Transverse colon (tissue), 4 donors: ENCODE measurements at regions of chr3 and their contacts with region 1.

Region 1: GRCh38 chr3:150546226-150547044 is at the starts of genes EIF2A and SERP1:
- DNase-seq: peak; percentile 99
- H3K4me3 ChIP-seq: peak within 1 kb of the TSS; percentile 67 to 94 (median 82)
- H3K27ac ChIP-seq: peak within 1 kb of the TSS; percentile 96 to 100 (median 98)
- H3K4me1 ChIP-seq: peaks cover 20 to 38% (median 27%) of the 10 kb centered on the region in 4 donors
- H3K27me3 ChIP-seq: no peaks in the 10 kb centered on the region
- CTCF ChIP-seq: no peak
- EP300 ChIP-seq: no peak
- POLR2A ChIP-seq: peak; percentile 99
- total RNA-seq, gene EIF2A: 20.9 to 132 (median 72.2) TPM
- total RNA-seq, gene SERP1: 96.9 to 341 (median 275) TPM

Region 2: DNA sequence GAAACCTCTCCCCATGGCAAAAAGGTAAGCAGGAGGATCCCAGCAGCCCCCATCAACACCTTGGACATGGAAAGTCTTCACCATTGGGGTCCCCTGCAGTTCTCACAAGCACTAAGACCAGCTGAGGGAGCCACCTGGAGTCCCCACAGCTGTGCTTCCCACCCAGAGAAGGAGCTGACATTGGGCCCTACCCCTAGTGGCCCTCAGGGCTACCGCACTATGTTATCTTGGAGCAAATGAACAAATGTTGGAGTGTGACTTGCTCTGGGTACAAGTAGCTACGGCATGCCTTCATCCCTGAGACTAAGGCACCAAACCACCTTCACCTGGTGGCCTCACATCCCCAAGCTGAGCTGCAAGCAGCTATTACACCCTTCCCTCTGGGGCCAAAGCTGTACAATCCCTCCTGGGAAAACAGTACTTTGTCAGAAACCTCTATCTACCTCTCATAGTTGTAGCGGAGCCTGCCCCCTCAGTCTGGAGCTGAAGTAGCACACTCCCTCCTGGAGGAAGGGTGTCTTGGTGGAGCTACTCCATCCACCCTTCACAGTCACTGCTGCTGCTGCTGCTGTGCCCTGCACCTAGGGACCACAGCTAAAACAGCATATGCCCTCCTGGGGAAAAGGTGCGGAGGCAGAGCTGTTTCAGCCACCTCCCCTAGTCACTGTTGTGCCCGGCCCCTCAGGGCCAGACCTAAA is 42.9 kb before region 1 on chr3:
- in situ Hi-C with region 1: no loop called
- intact Hi-C with region 1: no loop called
- DNase-seq: no peak
- H3K4me3 ChIP-seq: no peak overlapping the region
- H3K27ac ChIP-seq: no peak overlapping the region
- H3K4me1 ChIP-seq: no peaks in the 10 kb centered on the region
- H3K27me3 ChIP-seq: no peaks in the 10 kb centered on the region
- CTCF ChIP-seq: no peak
- EP300 ChIP-seq: no peak
- POLR2A ChIP-seq: no peak

Region 3: GRCh38 chr3:150610790-150611189 is 64.4 kb after region 1 on chr3:
- in situ Hi-C with region 1: no loop called
- intact Hi-C with region 1: no loop called
- DNase-seq: no peak
- H3K4me3 ChIP-seq: no peak overlapping the region
- H3K27ac ChIP-seq: no peak overlapping the region
- H3K4me1 ChIP-seq: peaks cover 4 to 47% (median 18%) of the 10 kb centered on the region in 4 donors
- H3K27me3 ChIP-seq: no peaks in the 10 kb centered on the region
- CTCF ChIP-seq: no peak
- EP300 ChIP-seq: no peak
- POLR2A ChIP-seq: no peak

Region 4: GRCh38 chr3:150703299-150704134 is 157.1 kb after region 1 on chr3 and contains the start of gene ERICH6:
- in situ Hi-C with region 1: loop called in 1 of 4 experiments (anchors 25 kb)
- intact Hi-C with region 1: no loop called
- DNase-seq: peak; percentile 93
- H3K4me3 ChIP-seq: peak within 1 kb of the TSS; percentile 33 to 87 (median 64)
- H3K27ac ChIP-seq: peak within 1 kb of the TSS; percentile 82 to 91 (median 86)
- H3K4me1 ChIP-seq: peaks cover 0 to 12% (median 7%) of the 10 kb centered on the region in 4 donors
- H3K27me3 ChIP-seq: no peaks in the 10 kb centered on the region
- CTCF ChIP-seq: peak in 2 of 5 experiments; percentile 8 to 60
- EP300 ChIP-seq: no peak
- POLR2A ChIP-seq: peak; percentile 58
- total RNA-seq, gene ERICH6: not detected